Vagina (tissue), 2 donors: ENCODE measurements at regions of chr11 and their contacts with region 1.

Region 1: GRCh38 chr11:94417386-94417987 is 16.3 kb upstream of the GPR83 start:
- DNase-seq: no peak
- H3K4me3 ChIP-seq: no peak overlapping the region
- H3K27ac ChIP-seq: no peak overlapping the region
- H3K4me1 ChIP-seq: no peaks in the 10 kb centered on the region
- H3K27me3 ChIP-seq: no peaks in the 10 kb centered on the region
- CTCF ChIP-seq: peak in 1 of 3 experiments; percentile 29
- POLR2A ChIP-seq: no peak

Region 2: DNA sequence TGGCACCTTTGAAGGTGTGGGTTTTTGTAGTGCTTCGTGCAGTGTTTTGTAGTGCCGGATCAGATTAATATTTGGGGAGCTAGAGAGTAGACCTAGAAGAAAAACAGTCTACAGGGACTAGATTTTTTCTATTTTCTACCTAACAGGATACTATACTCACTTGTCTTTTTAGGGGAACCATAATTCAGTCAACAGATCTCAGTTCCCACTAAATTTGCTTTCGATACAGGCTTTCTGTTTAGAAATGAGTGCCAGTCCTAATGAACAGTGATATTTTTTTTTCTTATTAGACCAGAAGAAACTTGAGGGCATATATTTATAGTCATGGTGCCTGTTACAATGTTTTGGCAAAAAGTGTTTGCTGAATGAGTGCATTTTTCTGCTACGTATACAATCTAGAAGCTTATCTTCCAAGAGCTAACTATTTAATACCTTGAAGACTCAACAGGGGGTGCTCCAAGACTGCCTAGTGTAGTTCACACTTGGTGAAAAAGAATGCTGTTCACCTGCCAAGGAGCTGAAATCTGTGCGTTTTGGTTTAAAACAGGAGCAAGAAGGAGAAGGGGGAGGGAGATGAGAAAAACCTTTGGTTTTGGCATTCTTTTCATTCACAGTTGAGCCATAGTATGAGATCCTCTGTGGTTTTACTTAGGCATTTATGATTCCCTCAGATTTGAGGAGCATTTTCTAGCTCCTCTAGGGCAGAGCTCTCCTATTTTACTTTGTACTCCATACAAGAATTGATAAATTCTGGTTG is 522.2 kb before region 1 on chr11:
- intact Hi-C with region 1: loop called (anchors 10 kb)
- DNase-seq: no peak
- H3K4me3 ChIP-seq: no peak overlapping the region
- H3K27ac ChIP-seq: no peak overlapping the region
- H3K4me1 ChIP-seq: no peaks in the 10 kb centered on the region
- H3K27me3 ChIP-seq: no peaks in the 10 kb centered on the region
- CTCF ChIP-seq: peak; percentile 34 to 58 (median 53)
- POLR2A ChIP-seq: no peak

Region 3: DNA sequence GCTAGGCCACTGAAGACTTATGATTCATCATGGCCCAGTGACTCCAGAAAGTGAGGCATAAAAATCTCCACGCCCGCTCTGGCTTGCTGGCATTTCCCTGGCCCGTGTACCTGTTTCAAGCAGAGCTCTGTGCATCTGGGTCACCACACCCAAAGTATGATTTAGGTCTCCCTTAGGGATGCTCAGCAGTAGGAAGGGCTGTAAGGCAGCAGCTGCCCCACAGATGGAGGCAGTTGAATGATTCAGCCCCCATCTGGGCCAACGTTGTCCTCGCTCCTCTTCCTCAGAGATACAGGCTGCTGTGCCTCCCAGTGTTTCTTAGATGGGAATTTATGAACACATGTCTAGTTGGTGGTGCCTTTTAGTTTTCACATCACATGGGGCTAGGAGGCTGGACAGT is 37.9 kb before region 1 on chr11:
- intact Hi-C with region 1: no loop called
- DNase-seq: no peak
- H3K4me3 ChIP-seq: no peak overlapping the region
- H3K27ac ChIP-seq: no peak overlapping the region
- H3K4me1 ChIP-seq: no peaks in the 10 kb centered on the region
- H3K27me3 ChIP-seq: no peaks in the 10 kb centered on the region
- CTCF ChIP-seq: no peak
- POLR2A ChIP-seq: no peak

Region 4: DNA sequence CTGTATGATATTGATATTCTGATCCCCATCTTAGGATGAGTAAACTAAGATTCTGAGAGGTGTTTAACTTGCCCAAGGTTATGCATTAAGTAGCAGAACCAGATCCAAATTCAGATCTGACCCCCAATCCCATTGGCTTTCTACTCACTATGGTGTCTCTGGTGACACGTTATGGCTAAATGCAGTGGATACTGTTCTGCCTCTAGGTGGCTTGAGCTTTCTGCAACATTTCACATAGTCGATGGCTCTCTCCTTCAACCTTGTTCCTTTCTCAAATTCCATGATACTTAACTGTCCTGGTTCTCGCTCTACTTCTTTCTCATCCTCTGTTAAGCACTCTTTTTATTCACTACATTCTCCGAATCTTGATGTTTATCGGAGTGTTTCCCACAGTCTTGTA is 104.2 kb after region 1 on chr11:
- intact Hi-C with region 1: no loop called
- DNase-seq: no peak
- H3K4me3 ChIP-seq: no peak overlapping the region
- H3K27ac ChIP-seq: no peak overlapping the region
- H3K4me1 ChIP-seq: no peaks in the 10 kb centered on the region
- H3K27me3 ChIP-seq: no peaks in the 10 kb centered on the region
- CTCF ChIP-seq: no peak
- POLR2A ChIP-seq: no peak

Region 5: DNA sequence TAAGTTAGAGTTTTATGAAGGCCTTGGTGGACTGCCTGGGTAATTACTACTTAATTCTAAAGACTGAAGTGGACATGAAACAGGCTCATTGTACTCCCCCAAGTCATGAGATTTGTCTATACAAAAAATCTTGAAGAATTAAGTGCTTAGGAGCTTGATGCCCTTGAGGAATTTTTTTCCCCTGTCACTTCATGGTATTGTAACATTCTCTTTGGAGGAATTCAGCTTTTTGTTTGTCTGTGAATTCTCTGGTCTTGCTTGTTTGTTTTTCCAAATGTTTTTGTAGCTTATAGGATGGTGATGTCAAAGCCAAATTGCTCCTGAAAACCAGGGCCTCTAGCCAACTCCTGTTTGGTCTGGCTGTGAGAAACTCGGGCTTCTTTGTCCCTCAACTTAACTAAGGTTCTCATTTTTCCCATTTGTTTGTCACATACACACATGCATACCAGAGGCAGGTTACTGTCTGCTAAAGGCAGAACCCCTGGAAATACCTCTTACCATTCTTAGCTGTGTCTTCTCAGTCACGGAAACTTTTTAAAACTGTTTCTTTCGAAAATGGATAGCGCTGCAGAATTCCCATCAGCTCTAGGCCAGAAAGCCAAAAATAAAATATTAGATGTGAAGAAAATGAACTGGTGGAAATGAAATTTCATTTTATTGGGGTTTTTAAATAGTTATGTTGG is 417.6 kb after region 1 on chr11:
- intact Hi-C with region 1: no loop called
- DNase-seq: no peak
- H3K4me3 ChIP-seq: no peak overlapping the region
- H3K27ac ChIP-seq: no peak overlapping the region
- H3K4me1 ChIP-seq: peaks cover 27% of the 10 kb centered on the region
- H3K27me3 ChIP-seq: no peaks in the 10 kb centered on the region
- CTCF ChIP-seq: no peak
- POLR2A ChIP-seq: no peak